CD8-positive, alpha-beta memory T cell (primary cell): ENCODE measurements at regions of chr19 and their contacts with region 1.

Region 1: DNA sequence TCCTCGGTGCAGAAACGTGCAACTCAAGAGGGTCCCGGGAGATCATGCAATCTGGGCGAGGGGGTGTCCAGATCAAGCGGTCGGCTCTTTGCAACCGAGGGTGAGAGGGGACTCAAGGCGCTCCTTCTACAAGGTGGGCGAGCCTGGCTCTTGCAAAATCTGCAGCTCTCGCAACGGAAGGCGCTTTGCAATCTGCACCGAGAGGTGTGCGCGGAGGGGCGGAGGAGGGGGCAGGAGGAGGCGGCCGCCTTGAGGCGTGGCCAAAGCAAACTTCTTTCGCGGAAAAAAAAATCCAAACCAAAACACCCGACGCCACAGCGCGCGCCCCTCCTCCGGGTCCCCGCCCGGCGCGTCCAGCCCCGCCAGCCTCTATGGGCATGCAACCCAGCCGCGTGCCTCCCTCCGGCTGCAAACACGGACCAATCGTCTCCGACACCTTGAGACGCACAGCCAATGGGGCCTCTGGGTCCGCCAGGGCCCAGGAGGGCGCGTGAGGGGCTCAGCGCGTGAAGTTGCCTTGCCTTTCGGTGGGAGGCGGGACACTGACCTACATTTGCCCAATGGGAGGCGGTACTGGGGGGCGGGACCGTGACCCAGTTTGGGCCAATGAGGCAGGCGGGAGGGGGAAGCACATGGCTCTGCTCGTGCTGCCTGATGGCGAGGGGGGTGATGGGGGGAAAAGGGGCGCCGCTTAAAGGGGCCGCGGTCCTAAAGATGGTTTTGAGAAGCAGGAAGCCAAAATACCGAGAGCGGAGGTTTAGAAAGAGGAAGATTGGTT is at the start of gene DBP:
- DNase-seq: peak; percentile 99 to 100 (median 100)
- H3K4me3 ChIP-seq: peak within 1 kb of the TSS; percentile 97
- H3K4me3 Mint-ChIP-seq: peak within 1 kb of the TSS; percentile 84 to 100 (median 98)
- H3K27ac ChIP-seq: peak within 1 kb of the TSS; percentile 97
- H3K27ac Mint-ChIP-seq: peak within 1 kb of the TSS; percentile 88 to 100 (median 98)
- H3K4me1 ChIP-seq: peaks cover 45% of the 10 kb centered on the region
- H3K4me1 Mint-ChIP-seq: peaks cover 35 to 67% (median 42%) of the 10 kb centered on the region in 3 donors
- H3K27me3 ChIP-seq: no peaks in the 10 kb centered on the region
- H3K27me3 Mint-ChIP-seq: peaks cover 0 to 2% of the 10 kb centered on the region in 2 donors
- total RNA-seq, gene DBP: 10.9 to 12.1 TPM

Region 2: DNA sequence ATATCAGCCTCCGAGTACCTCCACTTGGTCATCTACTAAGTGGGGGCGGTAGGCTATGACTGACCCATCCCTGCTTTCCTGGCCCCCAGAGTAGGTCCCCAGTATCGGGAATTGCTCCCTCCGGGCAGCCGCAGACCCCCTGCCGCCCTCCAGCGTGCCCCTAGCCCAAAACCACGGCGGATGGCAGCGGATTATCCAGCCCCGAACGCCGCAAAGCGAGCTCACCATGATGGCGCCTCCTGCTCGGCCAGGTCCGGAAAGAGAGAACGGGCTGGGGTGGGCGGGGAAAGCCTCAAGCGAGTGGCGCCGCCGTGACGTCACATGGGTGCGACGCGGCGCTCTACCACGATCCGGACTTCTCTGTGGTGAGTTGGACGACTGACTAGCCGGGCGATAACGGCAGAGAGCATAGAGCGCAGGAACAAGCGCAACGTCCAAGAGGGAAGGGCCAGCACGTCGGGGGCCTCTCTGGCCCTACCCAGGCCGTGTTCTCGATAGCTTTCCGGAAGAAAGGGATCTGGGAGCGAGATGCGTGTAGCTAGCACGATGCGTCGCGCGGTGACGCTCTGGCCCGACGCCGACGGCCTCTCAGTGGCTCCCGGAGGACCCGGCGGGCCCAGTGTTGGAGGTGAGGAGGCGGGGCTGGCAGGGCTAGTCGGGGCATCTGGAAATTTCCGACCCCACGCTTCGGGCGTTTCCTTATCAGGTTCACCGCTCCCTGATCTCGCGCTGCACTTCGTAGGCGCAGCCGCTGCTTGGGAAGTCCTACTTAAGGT is 18.3 kb before region 1 on chr19 and contains the starts of genes RPL18 and SPHK2:
- CTCF ChIA-PET with region 1: interaction called, 9 read pairs
- POLR2A ChIA-PET with region 1: interaction called, 23 read pairs
- DNase-seq: peak; percentile 91 to 97 (median 93)
- H3K4me3 ChIP-seq: peak within 1 kb of the TSS; percentile 76
- H3K4me3 Mint-ChIP-seq: peak within 1 kb of the TSS; percentile 94 to 100 (median 98)
- H3K27ac ChIP-seq: peak within 1 kb of the TSS; percentile 84
- H3K27ac Mint-ChIP-seq: peak within 1 kb of the TSS; percentile 90 to 99 (median 98)
- H3K4me1 ChIP-seq: peaks cover 43% of the 10 kb centered on the region
- H3K4me1 Mint-ChIP-seq: peaks cover 54 to 67% (median 62%) of the 10 kb centered on the region in 3 donors
- H3K27me3 ChIP-seq: no peaks in the 10 kb centered on the region
- H3K27me3 Mint-ChIP-seq: peaks cover 0 to 3% of the 10 kb centered on the region in 2 donors
- total RNA-seq, gene RPL18: 1,778 to 1,810 TPM
- total RNA-seq, gene SPHK2: 37.5 to 38.5 TPM

Region 3: DNA sequence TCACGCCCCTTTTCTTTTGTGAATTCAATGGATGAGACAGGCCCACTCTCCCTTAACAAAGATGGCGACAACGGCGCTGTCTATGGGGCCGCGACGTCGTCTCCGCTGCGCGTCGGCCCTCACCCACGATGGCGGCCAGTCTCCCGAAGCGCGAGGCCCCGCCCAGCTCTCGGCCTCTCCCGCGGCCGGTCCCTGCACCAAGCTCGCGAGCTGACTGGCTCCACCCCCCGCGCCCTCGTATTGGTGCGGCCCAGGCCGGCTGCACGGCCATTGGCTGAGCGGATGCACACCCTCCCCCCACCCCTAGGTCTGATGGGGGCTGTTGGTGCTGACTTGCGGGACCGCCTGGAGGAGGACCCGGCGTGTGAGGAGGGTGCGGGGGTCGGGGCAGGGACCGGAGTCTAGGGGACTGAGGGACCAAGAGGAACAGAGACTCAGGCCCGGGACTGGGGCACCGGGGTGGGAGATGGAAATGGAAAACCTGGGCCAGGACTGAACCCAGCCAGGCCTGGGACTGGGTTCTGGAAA is 13.2 kb before region 1 on chr19:
- CTCF ChIA-PET with region 1: interaction called, 9 read pairs
- POLR2A ChIA-PET with region 1: interaction called, 23 read pairs
- DNase-seq: peak; percentile 88 to 94 (median 92)
- H3K4me3 ChIP-seq: peak overlapping the region; percentile 37
- H3K4me3 Mint-ChIP-seq: peak overlapping the region; percentile 55 to 92 (median 80)
- H3K27ac ChIP-seq: peak overlapping the region; percentile 54
- H3K27ac Mint-ChIP-seq: peak overlapping the region; percentile 82 to 97 (median 94)
- H3K4me1 ChIP-seq: peaks cover 20% of the 10 kb centered on the region
- H3K4me1 Mint-ChIP-seq: peaks cover 41 to 53% (median 49%) of the 10 kb centered on the region in 3 donors
- H3K27me3 ChIP-seq: no peaks in the 10 kb centered on the region
- H3K27me3 Mint-ChIP-seq: peaks cover 0 to 2% of the 10 kb centered on the region in 2 donors

Region 4: DNA sequence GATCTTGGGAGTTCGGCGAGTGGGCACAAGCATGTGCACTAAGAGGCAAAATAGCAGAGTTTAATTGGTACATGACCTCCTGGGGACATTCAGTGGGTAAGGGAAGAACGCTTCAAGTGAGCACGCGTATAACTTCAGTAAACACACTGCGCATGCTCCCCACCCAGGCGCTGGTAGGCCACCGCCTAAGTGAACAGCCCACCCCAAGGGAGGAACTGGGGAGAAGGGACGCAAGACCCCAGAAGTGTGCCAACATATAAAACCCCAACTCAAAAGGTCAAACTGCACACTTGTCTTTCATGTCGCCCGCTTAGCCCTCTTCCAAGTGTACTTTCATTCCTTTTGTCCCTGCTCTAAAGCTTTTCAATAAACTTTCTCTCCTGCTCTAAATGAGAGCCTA is 46.0 kb after region 1 on chr19:
- CTCF ChIA-PET with region 1: no interaction called
- POLR2A ChIA-PET with region 1: no interaction called
- DNase-seq: peak in 1 of 5 donors; percentile 37
- H3K4me3 ChIP-seq: no peak overlapping the region
- H3K4me3 Mint-ChIP-seq: no peak overlapping the region
- H3K27ac ChIP-seq: no peak overlapping the region
- H3K27ac Mint-ChIP-seq: peak overlapping the region in 1 of 8 donors; percentile 84
- H3K4me1 ChIP-seq: no peaks in the 10 kb centered on the region
- H3K4me1 Mint-ChIP-seq: no peaks in the 10 kb centered on the region
- H3K27me3 ChIP-seq: no peaks in the 10 kb centered on the region
- H3K27me3 Mint-ChIP-seq: no peaks in the 10 kb centered on the region